Pancreas (tissue), 10 donors: ENCODE measurements at regions of chr12 and their contacts with region 1.

Region 1: GRCh38 chr12:57166971-57167371 is 19.6 kb upstream of the LRP1-AS start:
- DNase-seq: peak in 1 of 6 donors; percentile 56
- ATAC-seq: no peak
- H3K4me3 ChIP-seq: no peak overlapping the region
- H3K27ac ChIP-seq: no peak overlapping the region
- H3K4me1 ChIP-seq: no peaks in the 10 kb centered on the region
- H3K27me3 ChIP-seq: no peaks in the 10 kb centered on the region
- CTCF ChIP-seq: no peak

Region 2: GRCh38 chr12:57129889-57130288 is 37.1 kb before region 1 on chr12:
- intact Hi-C with region 1: loop called in 1 of 3 experiments (anchors 5 kb)
- DNase-seq: no peak
- ATAC-seq: peak in 1 of 4 donors; percentile 2
- H3K4me3 ChIP-seq: peak overlapping the region in 1 of 4 donors; percentile 67
- H3K27ac ChIP-seq: peak overlapping the region in 1 of 4 donors; percentile 96
- H3K4me1 ChIP-seq: peaks cover 0 to 9% (median 7%) of the 10 kb centered on the region in 3 donors
- H3K27me3 ChIP-seq: no peaks in the 10 kb centered on the region
- CTCF ChIP-seq: no peak

Region 3: GRCh38 chr12:57238854-57239554 is 72.0 kb after region 1 on chr12:
- intact Hi-C with region 1: no loop called
- DNase-seq: peak; percentile 75 to 96 (median 90)
- ATAC-seq: peak; percentile 70 to 88 (median 83)
- H3K4me3 ChIP-seq: peak overlapping the region; percentile 25 to 59 (median 39)
- H3K27ac ChIP-seq: no peak overlapping the region
- H3K4me1 ChIP-seq: peaks cover 0 to 34% (median 3%) of the 10 kb centered on the region in 3 donors
- H3K27me3 ChIP-seq: peaks cover 0 to 4% (median 0%) of the 10 kb centered on the region in 4 donors
- CTCF ChIP-seq: peak; percentile 100